Naive thymus-derived CD4-positive, alpha-beta T cell (primary cell): ENCODE measurements at regions of chr15 and their contacts with region 1.

Region 1: DNA sequence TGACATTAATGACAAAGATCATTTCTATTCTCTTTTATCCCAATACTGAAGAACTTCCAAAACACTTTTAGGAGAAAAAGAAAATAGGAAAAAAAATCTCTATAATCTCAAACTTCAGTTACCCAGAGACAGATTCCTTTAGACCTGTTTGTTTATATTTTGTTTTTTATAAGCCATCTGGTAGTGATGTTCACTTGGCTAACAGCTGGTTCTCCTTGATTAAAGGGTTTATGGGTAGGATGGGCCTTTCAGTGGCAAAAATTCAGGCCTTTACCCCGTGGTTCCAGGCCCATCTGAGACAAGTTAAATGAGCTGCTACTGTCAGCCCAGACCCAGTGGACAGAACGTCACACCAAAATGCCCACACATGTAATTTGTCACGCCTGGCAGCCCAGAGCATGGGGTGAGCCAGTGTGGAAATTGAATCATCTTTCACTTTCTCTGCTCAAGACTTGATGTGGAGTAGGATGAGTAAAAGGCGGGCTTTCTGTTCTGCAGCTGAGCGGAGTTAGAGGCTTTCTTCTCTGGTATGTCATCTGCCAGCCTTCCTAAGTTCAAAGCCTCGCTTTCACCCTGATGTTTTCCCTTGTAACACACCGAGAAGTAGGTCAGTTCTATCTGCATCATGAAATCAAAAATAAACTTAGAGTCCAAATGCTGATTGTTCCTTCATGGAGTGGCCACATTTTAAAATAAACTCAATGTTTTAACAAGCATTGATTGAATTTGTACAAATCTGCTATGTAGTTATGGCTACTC is 62.5 kb upstream of the SKOR1 start:
- DNase-seq: peak in 8 of 9 donors; percentile 26 to 63 (median 52)
- ATAC-seq: peak; percentile 67
- H3K4me3 ChIP-seq: no peak overlapping the region
- H3K4me3 Mint-ChIP-seq: peak overlapping the region; percentile 34 to 83 (median 72)
- H3K27ac ChIP-seq: no peak overlapping the region
- H3K27ac Mint-ChIP-seq: peak overlapping the region; percentile 45 to 95 (median 81)
- H3K4me1 ChIP-seq: peaks cover 8 to 44% of the 10 kb centered on the region in 2 donors
- H3K4me1 Mint-ChIP-seq: peaks cover 40 to 88% (median 63%) of the 10 kb centered on the region in 7 donors
- H3K27me3 ChIP-seq: no peaks in the 10 kb centered on the region
- H3K27me3 Mint-ChIP-seq: peaks cover 0 to 7% (median 0%) of the 10 kb centered on the region in 5 donors

Region 2: DNA sequence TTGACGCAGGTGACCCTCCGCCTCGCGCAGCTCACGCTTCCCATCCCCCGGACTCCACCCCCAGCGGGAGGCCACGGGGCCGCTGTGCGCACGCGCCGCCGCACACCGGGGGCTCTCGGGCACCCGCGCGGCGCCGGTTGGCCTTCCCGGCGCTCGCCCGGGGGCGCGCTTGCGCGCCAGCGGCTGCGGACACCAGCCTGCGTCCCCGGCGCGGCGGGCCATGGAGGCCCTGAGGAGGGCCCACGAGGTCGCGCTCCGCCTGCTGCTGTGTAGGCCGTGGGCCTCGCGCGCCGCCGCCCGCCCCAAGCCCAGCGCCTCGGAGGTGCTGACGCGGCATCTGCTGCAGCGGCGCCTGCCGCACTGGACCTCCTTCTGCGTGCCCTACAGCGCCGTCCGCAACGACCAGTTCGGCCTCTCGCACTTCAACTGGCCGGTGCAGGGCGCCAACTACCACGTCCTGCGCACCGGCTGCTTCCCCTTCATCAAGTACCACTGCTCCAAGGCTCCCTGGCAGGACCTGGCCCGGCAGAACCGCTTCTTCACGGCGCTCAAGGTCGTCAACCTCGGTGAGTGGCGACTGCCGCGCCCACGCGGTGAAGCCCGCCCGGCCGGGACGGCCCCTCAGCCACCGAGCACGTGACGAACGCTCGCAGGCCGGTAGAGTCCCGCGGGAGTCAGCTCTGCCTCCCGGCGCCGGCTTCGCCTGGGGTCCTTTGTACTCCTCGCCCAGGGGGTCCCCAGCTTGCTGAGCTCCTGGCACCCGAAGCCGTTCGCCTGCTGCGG is 241.6 kb before region 1 on chr15 and contains the start of gene C15orf61:
- CTCF ChIA-PET with region 1: no interaction called
- POLR2A ChIA-PET with region 1: no interaction called
- intact Hi-C with region 1: loop called in 1 of 2 experiments (anchors 10 kb)
- DNase-seq: peak; percentile 78 to 92 (median 82)
- ATAC-seq: peak; percentile 90
- H3K4me3 ChIP-seq: peak within 1 kb of the TSS; percentile 87
- H3K4me3 Mint-ChIP-seq: peak within 1 kb of the TSS; percentile 85 to 98 (median 95)
- H3K27ac ChIP-seq: peak within 1 kb of the TSS; percentile 85
- H3K27ac Mint-ChIP-seq: peak within 1 kb of the TSS; percentile 88 to 96 (median 94)
- H3K4me1 ChIP-seq: peaks cover 16 to 28% of the 10 kb centered on the region in 2 donors
- H3K4me1 Mint-ChIP-seq: peaks cover 20 to 40% (median 34%) of the 10 kb centered on the region in 7 donors
- H3K27me3 ChIP-seq: no peaks in the 10 kb centered on the region
- H3K27me3 Mint-ChIP-seq: no peaks in the 10 kb centered on the region
- total RNA-seq, gene C15orf61: 4.3 to 11.0 (median 8.2) TPM

Region 3: GRCh38 chr15:67542420-67543347 is 220.1 kb before region 1 on chr15 and contains the start of gene MAP2K5:
- CTCF ChIA-PET with region 1: no interaction called
- POLR2A ChIA-PET with region 1: no interaction called
- intact Hi-C with region 1: loop called (anchors 1 to 5 kb)
- DNase-seq: peak; percentile 75 to 87 (median 78)
- ATAC-seq: peak; percentile 89
- H3K4me3 ChIP-seq: peak within 1 kb of the TSS; percentile 90
- H3K4me3 Mint-ChIP-seq: peak within 1 kb of the TSS; percentile 92 to 98 (median 98)
- H3K27ac ChIP-seq: peak within 1 kb of the TSS; percentile 78
- H3K27ac Mint-ChIP-seq: peak within 1 kb of the TSS; percentile 97 to 100 (median 99)
- H3K4me1 ChIP-seq: peaks cover 7 to 22% of the 10 kb centered on the region in 2 donors
- H3K4me1 Mint-ChIP-seq: peaks cover 20 to 68% (median 56%) of the 10 kb centered on the region in 7 donors
- H3K27me3 ChIP-seq: no peaks in the 10 kb centered on the region
- H3K27me3 Mint-ChIP-seq: no peaks in the 10 kb centered on the region
- total RNA-seq, gene MAP2K5: 23.4 to 43.4 (median 35.7) TPM

Region 4: GRCh38 chr15:67652586-67652985 is 110.2 kb before region 1 on chr15:
- CTCF ChIA-PET with region 1: no interaction called
- POLR2A ChIA-PET with region 1: interaction called, 3 read pairs
- intact Hi-C with region 1: loop called in 1 of 2 experiments (anchors 10 kb)
- DNase-seq: no peak
- ATAC-seq: no peak
- H3K4me3 ChIP-seq: no peak overlapping the region
- H3K4me3 Mint-ChIP-seq: no peak overlapping the region
- H3K27ac ChIP-seq: no peak overlapping the region
- H3K27ac Mint-ChIP-seq: no peak overlapping the region
- H3K4me1 ChIP-seq: no peaks in the 10 kb centered on the region
- H3K4me1 Mint-ChIP-seq: peaks cover 0 to 5% (median 0%) of the 10 kb centered on the region in 7 donors
- H3K27me3 ChIP-seq: no peaks in the 10 kb centered on the region
- H3K27me3 Mint-ChIP-seq: no peaks in the 10 kb centered on the region

Region 5: DNA sequence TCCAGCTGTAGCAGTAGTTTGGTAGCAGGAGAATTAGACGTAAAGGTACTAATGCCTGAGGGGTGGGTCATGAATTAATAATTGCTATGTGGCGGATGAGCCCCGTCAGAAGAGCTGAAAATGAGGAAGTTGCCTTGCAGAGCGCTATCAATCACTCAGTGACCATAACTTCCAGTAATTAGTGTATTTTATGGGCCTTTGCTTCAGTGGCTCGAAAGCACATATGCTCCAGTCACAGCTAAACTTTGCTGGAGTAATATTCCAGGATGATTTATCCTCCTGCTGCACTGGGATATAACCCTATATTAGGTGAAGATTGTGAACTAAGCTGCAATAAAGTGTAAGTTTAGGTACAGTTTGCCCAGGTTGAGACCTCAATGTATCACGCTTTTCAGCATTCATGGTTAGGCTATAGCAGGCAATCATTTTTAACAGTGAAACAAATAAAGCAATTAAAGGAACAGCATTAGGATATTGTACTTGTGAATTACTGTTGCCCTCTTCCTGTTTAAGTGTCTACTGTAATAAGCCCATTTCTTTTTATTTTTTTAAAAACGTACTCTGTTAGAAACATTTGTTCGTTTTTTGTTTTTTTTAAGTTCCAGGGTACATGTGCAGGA is 42.1 kb before region 1 on chr15:
- CTCF ChIA-PET with region 1: interaction called, 3 read pairs
- POLR2A ChIA-PET with region 1: no interaction called
- intact Hi-C with region 1: loop called in 1 of 2 experiments (anchors 5 kb)
- DNase-seq: no peak
- ATAC-seq: no peak
- H3K4me3 ChIP-seq: no peak overlapping the region
- H3K4me3 Mint-ChIP-seq: no peak overlapping the region
- H3K27ac ChIP-seq: no peak overlapping the region
- H3K27ac Mint-ChIP-seq: no peak overlapping the region
- H3K4me1 ChIP-seq: peaks cover 0 to 3% of the 10 kb centered on the region in 2 donors
- H3K4me1 Mint-ChIP-seq: peaks cover 3 to 39% (median 17%) of the 10 kb centered on the region in 7 donors
- H3K27me3 ChIP-seq: no peaks in the 10 kb centered on the region
- H3K27me3 Mint-ChIP-seq: no peaks in the 10 kb centered on the region

Region 6: DNA sequence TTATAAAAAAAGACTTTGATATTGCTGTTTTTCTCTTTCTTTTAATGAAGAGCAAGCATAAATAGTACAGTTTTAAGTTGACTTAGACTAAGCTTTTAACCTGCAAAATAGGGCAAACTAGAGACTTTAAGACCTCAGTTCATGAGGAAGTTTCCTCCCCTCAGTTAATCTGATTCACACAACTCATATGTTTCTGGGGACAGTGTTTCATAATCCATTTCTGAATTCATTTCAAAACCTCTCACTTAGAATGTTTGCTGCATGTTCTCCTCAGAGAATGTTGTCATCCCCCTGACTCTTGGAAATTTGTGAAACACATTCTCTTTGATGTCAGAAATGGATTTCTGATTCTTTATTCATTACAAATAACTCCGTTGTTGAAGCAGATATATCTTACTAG is 16.8 kb before region 1 on chr15:
- CTCF ChIA-PET with region 1: no interaction called
- POLR2A ChIA-PET with region 1: interaction called, 9 read pairs
- intact Hi-C with region 1: loop called (anchors 1 to 2 kb)
- DNase-seq: no peak
- ATAC-seq: peak; percentile 31
- H3K4me3 ChIP-seq: peak overlapping the region; percentile 12
- H3K4me3 Mint-ChIP-seq: peak overlapping the region; percentile 3 to 79 (median 69)
- H3K27ac ChIP-seq: peak overlapping the region; percentile 21
- H3K27ac Mint-ChIP-seq: peak overlapping the region; percentile 31 to 89 (median 81)
- H3K4me1 ChIP-seq: peaks cover 3 to 55% of the 10 kb centered on the region in 2 donors
- H3K4me1 Mint-ChIP-seq: peaks cover 39 to 91% (median 69%) of the 10 kb centered on the region in 7 donors
- H3K27me3 ChIP-seq: no peaks in the 10 kb centered on the region
- H3K27me3 Mint-ChIP-seq: no peaks in the 10 kb centered on the region

Region 7: GRCh38 chr15:67833710-67834511 is 71.1 kb after region 1 on chr15:
- CTCF ChIA-PET with region 1: no interaction called
- POLR2A ChIA-PET with region 1: interaction called, 3 read pairs
- intact Hi-C with region 1: loop called in 1 of 2 experiments (anchors 5 kb)
- DNase-seq: peak in 4 of 9 donors; percentile 34 to 54 (median 45)
- ATAC-seq: peak; percentile 51
- H3K4me3 ChIP-seq: peak overlapping the region; percentile 59
- H3K4me3 Mint-ChIP-seq: peak overlapping the region; percentile 76 to 92 (median 84)
- H3K27ac ChIP-seq: no peak overlapping the region
- H3K27ac Mint-ChIP-seq: peak overlapping the region in 1 of 9 donors; percentile 48
- H3K4me1 ChIP-seq: peaks cover 34 to 43% of the 10 kb centered on the region in 2 donors
- H3K4me1 Mint-ChIP-seq: peaks cover 27 to 74% (median 46%) of the 10 kb centered on the region in 7 donors
- H3K27me3 ChIP-seq: peaks cover 5 to 29% of the 10 kb centered on the region in 2 donors
- H3K27me3 Mint-ChIP-seq: peaks cover 47 to 89% (median 56%) of the 10 kb centered on the region in 5 donors